Activated CD4-positive, alpha-beta T cell treated with anti-CD3 and anti-CD28 coated beads for 36 hours (primary cell): ENCODE measurements at regions of chr14 and their contacts with region 1.

Region 1: GRCh38 chr14:64387694-64388532 is at the start of gene MTHFD1:
- DNase-seq: peak; percentile 99
- ATAC-seq: peak; percentile 95
- H3K4me3 Mint-ChIP-seq: peak within 1 kb of the TSS; percentile 93
- H3K27ac Mint-ChIP-seq: peak within 1 kb of the TSS; percentile 93
- H3K4me1 Mint-ChIP-seq: peaks cover 34% of the 10 kb centered on the region
- H3K27me3 Mint-ChIP-seq: no peaks in the 10 kb centered on the region
- total RNA-seq, gene MTHFD1: 213 to 222 TPM

Region 2: GRCh38 chr14:63641473-63642228 is 746.3 kb before region 1 on chr14 and contains the start of gene WDR89:
- CTCF ChIA-PET with region 1: no interaction called
- POLR2A ChIA-PET with region 1: no interaction called
- intact Hi-C with region 1: loop called (anchors 5 kb)
- DNase-seq: peak; percentile 98
- ATAC-seq: peak; percentile 87
- H3K4me3 Mint-ChIP-seq: peak within 1 kb of the TSS; percentile 79
- H3K27ac Mint-ChIP-seq: peak within 1 kb of the TSS; percentile 97
- H3K4me1 Mint-ChIP-seq: peaks cover 43% of the 10 kb centered on the region
- H3K27me3 Mint-ChIP-seq: no peaks in the 10 kb centered on the region
- total RNA-seq, gene WDR89: 13.9 to 27.2 TPM

Region 3: DNA sequence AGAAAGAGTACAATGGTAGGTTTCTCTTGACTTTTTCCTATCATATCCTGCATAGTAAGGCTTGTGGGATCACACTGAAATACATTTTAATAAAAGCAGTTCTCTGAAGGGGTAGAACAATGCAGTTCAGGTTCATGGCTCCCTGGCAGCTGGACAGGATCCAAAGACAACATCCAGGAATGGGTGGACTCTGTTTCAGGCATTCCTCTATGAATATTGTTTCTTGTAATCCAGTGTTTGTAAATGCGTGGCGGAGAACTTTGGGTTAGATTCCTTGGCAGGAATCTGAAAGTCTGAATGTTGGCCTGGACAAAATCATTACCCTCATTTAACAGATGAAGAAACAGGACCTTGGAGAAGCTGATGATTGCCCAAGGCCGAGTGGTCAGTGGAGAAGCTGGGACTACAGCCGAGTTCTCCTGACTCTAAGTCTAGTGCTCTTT is 491.6 kb before region 1 on chr14:
- CTCF ChIA-PET with region 1: no interaction called
- POLR2A ChIA-PET with region 1: no interaction called
- intact Hi-C with region 1: no loop called
- DNase-seq: no peak
- ATAC-seq: no peak
- H3K4me3 Mint-ChIP-seq: no peak overlapping the region
- H3K27ac Mint-ChIP-seq: no peak overlapping the region
- H3K4me1 Mint-ChIP-seq: peaks cover 18% of the 10 kb centered on the region
- H3K27me3 Mint-ChIP-seq: no peaks in the 10 kb centered on the region

Region 4: DNA sequence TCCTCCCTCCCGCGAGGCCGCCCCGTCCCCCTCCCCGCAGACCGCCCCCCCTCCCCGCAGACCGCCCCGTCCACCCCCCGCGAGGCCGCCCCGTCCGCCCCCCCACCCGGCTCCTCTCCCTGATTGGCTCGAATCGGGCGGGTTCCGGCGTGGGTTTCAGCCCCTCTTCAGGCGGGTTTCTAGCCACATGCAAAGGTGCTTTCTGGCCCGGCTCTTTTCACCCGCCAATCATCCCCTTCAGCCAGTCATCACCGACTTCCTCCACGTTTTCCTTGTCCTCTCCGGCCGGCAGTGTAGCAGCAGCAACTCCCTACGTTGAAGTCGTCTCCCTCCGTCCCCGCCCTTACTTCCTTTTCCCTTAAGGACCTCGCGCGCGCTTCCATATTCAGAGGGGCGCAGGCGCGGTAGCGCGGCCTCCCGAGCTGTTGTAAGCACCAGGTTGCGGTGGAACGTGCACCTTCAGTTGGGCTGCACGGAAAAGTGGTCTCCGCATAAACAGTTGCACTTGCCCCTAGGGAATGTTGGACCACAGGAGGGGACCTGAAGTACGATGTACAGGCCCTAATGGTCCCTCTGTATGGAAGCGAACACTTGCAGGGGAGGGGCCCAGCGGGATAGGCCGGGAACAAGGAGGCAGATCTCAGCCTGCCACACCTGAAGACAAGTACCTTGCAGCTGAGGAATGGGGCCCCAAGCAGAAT is 49.1 kb before region 1 on chr14:
- CTCF ChIA-PET with region 1: interaction called, 4 read pairs
- POLR2A ChIA-PET with region 1: interaction called, 14 read pairs
- intact Hi-C with region 1: loop called (anchors 1 kb)
- DNase-seq: peak; percentile 92
- ATAC-seq: peak; percentile 88
- H3K4me3 Mint-ChIP-seq: peak overlapping the region; percentile 93
- H3K27ac Mint-ChIP-seq: peak overlapping the region; percentile 87
- H3K4me1 Mint-ChIP-seq: peaks cover 18% of the 10 kb centered on the region
- H3K27me3 Mint-ChIP-seq: no peaks in the 10 kb centered on the region

Region 5: GRCh38 chr14:64465191-64465822 is 77.4 kb after region 1 on chr14 and contains the start of gene AKAP5:
- CTCF ChIA-PET with region 1: interaction called, 3 read pairs
- POLR2A ChIA-PET with region 1: interaction called, 6 read pairs
- intact Hi-C with region 1: loop called (anchors 1 to 5 kb)
- DNase-seq: peak; percentile 70
- ATAC-seq: peak; percentile 79
- H3K4me3 Mint-ChIP-seq: peak within 1 kb of the TSS; percentile 74
- H3K27ac Mint-ChIP-seq: peak within 1 kb of the TSS; percentile 67
- H3K4me1 Mint-ChIP-seq: peaks cover 42% of the 10 kb centered on the region
- H3K27me3 Mint-ChIP-seq: no peaks in the 10 kb centered on the region
- total RNA-seq, gene AKAP5: 0.39 to 0.43 TPM

Region 6: GRCh38 chr14:64656986-64657385 is 269.1 kb after region 1 on chr14:
- CTCF ChIA-PET with region 1: no interaction called
- POLR2A ChIA-PET with region 1: no interaction called
- intact Hi-C with region 1: no loop called
- DNase-seq: no peak
- ATAC-seq: no peak
- H3K4me3 Mint-ChIP-seq: no peak overlapping the region
- H3K27ac Mint-ChIP-seq: no peak overlapping the region
- H3K4me1 Mint-ChIP-seq: peaks cover 16% of the 10 kb centered on the region
- H3K27me3 Mint-ChIP-seq: peaks cover 19% of the 10 kb centered on the region

Region 7: DNA sequence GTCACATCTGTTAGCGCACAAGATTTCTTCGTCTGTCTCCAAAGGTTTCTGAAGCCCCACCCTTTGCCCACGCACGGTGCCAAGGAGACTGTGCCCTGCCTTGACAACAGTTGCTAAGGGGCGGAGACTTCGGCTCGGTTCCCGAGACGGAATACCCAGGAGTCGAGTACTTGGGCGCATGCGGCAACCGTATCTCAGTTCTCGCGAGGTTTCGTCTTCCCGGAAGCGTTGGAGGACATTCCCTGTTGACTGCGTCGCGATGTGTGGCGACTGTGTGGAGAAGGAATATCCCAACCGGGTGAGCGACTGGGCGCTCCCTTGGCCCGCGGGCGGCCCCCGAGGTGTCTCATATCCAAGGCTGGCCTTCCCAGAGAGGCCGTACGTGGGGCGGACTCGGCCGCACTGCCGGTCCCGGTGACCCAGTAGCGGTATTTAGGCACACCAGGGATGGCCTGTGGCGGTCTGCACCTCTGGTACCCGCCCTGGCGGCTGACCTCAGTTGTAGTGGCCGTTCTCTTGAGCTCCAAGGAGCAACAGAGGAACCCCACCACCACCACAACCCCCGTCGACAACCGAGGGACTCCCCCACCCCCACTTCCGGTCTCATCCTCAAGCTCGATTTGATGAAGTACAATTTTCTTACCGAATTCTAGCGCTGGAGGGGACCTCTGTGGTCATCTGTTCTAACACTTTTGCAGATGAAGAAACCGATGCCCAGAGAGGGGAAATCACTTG is 526.5 kb after region 1 on chr14 and contains the start of gene CHURC1:
- CTCF ChIA-PET with region 1: no interaction called
- POLR2A ChIA-PET with region 1: no interaction called
- intact Hi-C with region 1: loop called in 1 of 2 experiments (anchors 1 kb)
- DNase-seq: peak; percentile 98
- ATAC-seq: peak; percentile 96
- H3K4me3 Mint-ChIP-seq: peak within 1 kb of the TSS; percentile 89
- H3K27ac Mint-ChIP-seq: peak within 1 kb of the TSS; percentile 95
- H3K4me1 Mint-ChIP-seq: peaks cover 45% of the 10 kb centered on the region
- H3K27me3 Mint-ChIP-seq: no peaks in the 10 kb centered on the region
- total RNA-seq, gene CHURC1: 37.6 to 66.1 TPM